AG04450 (cell line): ENCODE measurements at regions of chr1 and their contacts with region 1.

Region 1: DNA sequence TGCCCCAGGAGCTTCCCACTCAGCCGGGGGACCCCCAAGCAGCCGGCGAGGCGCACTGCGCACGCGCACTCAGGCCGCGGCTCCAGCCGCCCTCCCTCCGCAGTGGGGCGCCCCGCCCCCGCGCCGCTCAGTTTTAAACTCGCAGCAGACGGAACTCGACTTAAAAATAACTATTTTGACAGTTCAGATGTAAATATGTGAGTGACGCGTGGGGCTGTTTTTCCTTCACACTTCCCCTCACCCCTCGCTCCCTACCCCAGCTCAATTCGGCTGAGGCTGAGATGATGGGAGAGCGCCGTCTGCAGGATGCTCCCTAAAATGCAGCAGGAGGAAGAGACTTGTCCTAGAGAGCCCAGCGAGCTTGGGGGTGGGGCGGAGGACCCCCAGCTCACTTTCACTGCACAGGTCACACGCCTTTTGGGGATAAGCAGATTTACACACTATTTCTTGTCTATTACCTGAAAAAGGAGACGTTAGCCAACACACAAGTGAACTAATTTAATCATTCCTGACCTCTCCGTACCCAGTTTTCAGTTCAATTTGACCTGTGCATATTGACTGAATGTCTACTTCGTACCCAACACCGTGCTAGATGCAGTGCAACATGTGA is 8.9 kb upstream of the LEMD1 start:
- DNase-seq: no peak
- H3K4me3 ChIP-seq: peak overlapping the region; percentile 66
- H3K27ac ChIP-seq: no peak overlapping the region
- H3K27me3 ChIP-seq: peaks cover 39% of the 10 kb centered on the region
- CTCF ChIP-seq: peak; percentile 98

Region 2: GRCh38 chr1:205183676-205184335 is 247.0 kb before region 1 on chr1:
- CTCF ChIA-PET with region 1: no interaction called
- POLR2A ChIA-PET with region 1: no interaction called
- DNase-seq: peak; percentile 20
- H3K4me3 ChIP-seq: no peak overlapping the region
- H3K27ac ChIP-seq: peak overlapping the region; percentile 31
- H3K27me3 ChIP-seq: no peaks in the 10 kb centered on the region
- CTCF ChIP-seq: no peak

Region 3: GRCh38 chr1:205396967-205397616 is 33.7 kb before region 1 on chr1:
- CTCF ChIA-PET with region 1: interaction called, 21 read pairs
- POLR2A ChIA-PET with region 1: no interaction called
- DNase-seq: no peak
- H3K4me3 ChIP-seq: no peak overlapping the region
- H3K27ac ChIP-seq: no peak overlapping the region
- H3K27me3 ChIP-seq: peaks cover 9% of the 10 kb centered on the region
- CTCF ChIP-seq: peak; percentile 70

Region 4: GRCh38 chr1:205410581-205411298 is 20.1 kb before region 1 on chr1:
- CTCF ChIA-PET with region 1: interaction called, 13 read pairs
- POLR2A ChIA-PET with region 1: no interaction called
- DNase-seq: no peak
- H3K4me3 ChIP-seq: no peak overlapping the region
- H3K27ac ChIP-seq: no peak overlapping the region
- H3K27me3 ChIP-seq: peaks cover 30% of the 10 kb centered on the region
- CTCF ChIP-seq: no peak

Region 5: GRCh38 chr1:205416322-205416721 is 14.5 kb before region 1 on chr1:
- CTCF ChIA-PET with region 1: interaction called, 16 read pairs
- POLR2A ChIA-PET with region 1: interaction called, 4 read pairs
- DNase-seq: no peak
- H3K4me3 ChIP-seq: no peak overlapping the region
- H3K27ac ChIP-seq: no peak overlapping the region
- H3K27me3 ChIP-seq: peaks cover 64% of the 10 kb centered on the region
- CTCF ChIP-seq: no peak